Esophagus muscularis mucosa (tissue), 4 donors: ENCODE measurements at regions of chr2 and their contacts with region 1.

Region 1: GRCh38 chr2:133844214-133844892 is 276.1 kb upstream of the NCKAP5 start:
- DNase-seq: no peak
- H3K4me3 ChIP-seq: no peak overlapping the region
- H3K27ac ChIP-seq: no peak overlapping the region
- H3K4me1 ChIP-seq: peaks cover 4 to 15% (median 8%) of the 10 kb centered on the region in 4 donors
- H3K27me3 ChIP-seq: no peaks in the 10 kb centered on the region
- CTCF ChIP-seq: peak; percentile 76 to 95 (median 78)
- EP300 ChIP-seq: no peak
- POLR2A ChIP-seq: no peak

Region 2: DNA sequence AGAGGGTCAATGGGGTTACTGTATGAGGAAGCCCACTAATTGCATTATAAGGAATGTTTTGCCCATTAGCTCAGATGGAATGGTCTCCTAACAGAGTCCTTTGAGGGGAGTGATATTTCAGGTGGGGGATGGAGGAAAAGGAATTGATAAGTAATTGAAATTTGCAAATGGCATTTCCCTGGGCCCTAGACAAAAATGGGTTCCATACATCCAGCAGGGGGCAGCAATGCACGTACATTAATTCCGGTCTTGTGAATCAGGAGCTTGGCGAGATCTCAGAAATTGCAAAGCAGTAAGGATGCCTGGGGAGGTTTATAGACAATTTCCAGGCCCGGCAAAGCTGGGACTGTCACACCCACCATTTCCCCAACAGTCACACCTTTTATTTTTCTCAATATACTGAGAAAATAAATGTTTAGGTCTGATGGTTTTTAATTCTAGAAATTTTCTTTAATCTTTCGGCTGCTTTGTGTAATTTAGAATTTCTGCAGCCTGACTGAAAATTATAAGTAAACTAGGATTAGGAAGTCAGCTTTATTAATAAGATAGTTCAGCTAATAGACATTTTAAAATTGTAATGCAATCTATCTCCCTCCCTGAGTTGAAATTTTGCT is 1297.2 kb before region 1 on chr2:
- intact Hi-C with region 1: loop called (anchors 5 kb)
- DNase-seq: no peak
- H3K4me3 ChIP-seq: no peak overlapping the region
- H3K27ac ChIP-seq: no peak overlapping the region
- H3K4me1 ChIP-seq: peaks cover 0 to 9% (median 3%) of the 10 kb centered on the region in 4 donors
- H3K27me3 ChIP-seq: no peaks in the 10 kb centered on the region
- CTCF ChIP-seq: peak; percentile 55 to 70 (median 66)
- EP300 ChIP-seq: no peak
- POLR2A ChIP-seq: no peak

Region 3: DNA sequence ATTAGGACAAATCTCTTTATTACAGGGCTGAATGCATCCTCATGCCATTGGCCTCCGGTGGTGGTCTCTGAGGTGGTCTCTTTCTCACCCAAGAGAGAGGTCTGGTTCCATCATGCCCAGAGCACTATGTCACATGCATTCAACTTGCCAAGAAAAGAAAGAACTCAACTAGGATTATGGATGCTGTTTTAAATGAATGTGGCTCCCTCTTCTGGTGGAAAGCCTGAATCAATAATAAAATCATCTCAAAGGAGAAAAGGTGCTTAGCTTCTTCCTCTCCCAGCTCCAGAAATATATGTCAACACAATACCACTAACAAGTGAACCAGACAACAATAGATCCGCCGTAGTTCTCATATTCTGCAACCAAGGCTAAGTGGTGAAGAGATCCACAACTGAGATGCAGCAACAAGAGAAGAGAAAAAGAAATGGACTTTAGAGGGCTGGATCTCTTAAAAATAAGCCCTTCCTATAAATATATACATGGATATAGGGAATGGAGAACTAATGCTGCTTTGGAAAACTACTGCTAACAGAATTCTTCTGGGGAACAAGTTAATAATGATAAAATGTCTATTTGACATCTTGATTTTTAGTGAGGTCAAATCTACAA is 672.9 kb before region 1 on chr2:
- intact Hi-C with region 1: loop called (anchors 5 kb)
- DNase-seq: no peak
- H3K4me3 ChIP-seq: no peak overlapping the region
- H3K27ac ChIP-seq: no peak overlapping the region
- H3K4me1 ChIP-seq: no peaks in the 10 kb centered on the region
- H3K27me3 ChIP-seq: peaks cover 0 to 7% (median 0%) of the 10 kb centered on the region in 4 donors
- CTCF ChIP-seq: peak; percentile 57 to 59 (median 58)
- EP300 ChIP-seq: no peak
- POLR2A ChIP-seq: no peak

Region 4: DNA sequence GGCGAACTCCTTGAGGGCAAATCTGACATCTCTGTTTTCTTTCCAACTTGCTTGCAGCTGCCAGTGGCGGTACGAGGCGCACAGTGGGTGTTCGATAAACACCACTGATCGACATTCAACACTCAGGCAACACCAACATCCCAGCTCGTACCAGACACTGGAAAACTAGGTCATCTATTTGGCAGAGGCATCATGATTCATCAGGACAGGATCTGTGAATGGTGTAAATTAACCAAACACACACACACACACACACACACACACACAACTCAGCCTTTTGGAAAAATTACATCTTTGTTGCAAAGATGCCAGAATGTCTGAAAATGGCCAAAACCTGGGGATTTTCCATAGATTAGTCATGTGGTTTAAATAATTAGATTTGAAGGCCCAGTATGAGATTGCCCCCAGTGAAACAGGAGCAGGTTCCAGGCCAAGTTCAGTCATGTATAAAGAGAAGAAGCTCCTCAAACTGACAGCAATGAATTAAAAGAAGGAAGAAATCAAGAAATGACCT is 125.6 kb before region 1 on chr2:
- intact Hi-C with region 1: no loop called
- DNase-seq: no peak
- H3K4me3 ChIP-seq: no peak overlapping the region
- H3K27ac ChIP-seq: no peak overlapping the region
- H3K4me1 ChIP-seq: peaks cover 0 to 26% (median 18%) of the 10 kb centered on the region in 4 donors
- H3K27me3 ChIP-seq: no peaks in the 10 kb centered on the region
- CTCF ChIP-seq: no peak
- EP300 ChIP-seq: no peak
- POLR2A ChIP-seq: no peak

Region 5: GRCh38 chr2:133986081-133986837 is 141.9 kb after region 1 on chr2:
- intact Hi-C with region 1: no loop called
- DNase-seq: no peak
- H3K4me3 ChIP-seq: no peak overlapping the region
- H3K27ac ChIP-seq: peak overlapping the region in 1 of 4 donors; percentile 27
- H3K4me1 ChIP-seq: peaks cover 9 to 27% (median 20%) of the 10 kb centered on the region in 4 donors
- H3K27me3 ChIP-seq: no peaks in the 10 kb centered on the region
- CTCF ChIP-seq: no peak
- EP300 ChIP-seq: no peak
- POLR2A ChIP-seq: no peak

Region 6: DNA sequence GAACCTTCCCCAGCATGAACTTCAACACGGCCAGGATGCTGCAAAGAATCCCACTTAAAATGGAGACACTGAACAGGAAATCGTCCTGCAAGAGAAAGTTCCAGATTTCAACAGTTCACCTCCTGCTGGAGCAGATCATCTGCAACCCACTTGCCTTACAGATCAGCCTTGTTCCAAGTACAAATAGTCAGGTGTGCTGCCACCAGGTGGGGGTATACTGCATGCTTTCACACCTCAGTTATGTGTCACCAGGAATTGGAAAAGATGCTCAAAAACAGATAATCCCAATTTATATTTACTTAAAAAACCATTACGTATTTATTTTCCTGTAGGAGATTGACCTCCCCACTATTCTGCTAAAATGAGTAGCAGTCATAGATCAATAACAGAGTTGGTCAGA is 621.8 kb after region 1 on chr2:
- intact Hi-C with region 1: no loop called
- DNase-seq: no peak
- H3K4me3 ChIP-seq: no peak overlapping the region
- H3K27ac ChIP-seq: no peak overlapping the region
- H3K4me1 ChIP-seq: no peaks in the 10 kb centered on the region
- H3K27me3 ChIP-seq: no peaks in the 10 kb centered on the region
- CTCF ChIP-seq: no peak
- EP300 ChIP-seq: no peak
- POLR2A ChIP-seq: no peak